GM12878 (cell line): ENCODE measurements at regions of chr13 and their contacts with region 1.

Region 1: DNA sequence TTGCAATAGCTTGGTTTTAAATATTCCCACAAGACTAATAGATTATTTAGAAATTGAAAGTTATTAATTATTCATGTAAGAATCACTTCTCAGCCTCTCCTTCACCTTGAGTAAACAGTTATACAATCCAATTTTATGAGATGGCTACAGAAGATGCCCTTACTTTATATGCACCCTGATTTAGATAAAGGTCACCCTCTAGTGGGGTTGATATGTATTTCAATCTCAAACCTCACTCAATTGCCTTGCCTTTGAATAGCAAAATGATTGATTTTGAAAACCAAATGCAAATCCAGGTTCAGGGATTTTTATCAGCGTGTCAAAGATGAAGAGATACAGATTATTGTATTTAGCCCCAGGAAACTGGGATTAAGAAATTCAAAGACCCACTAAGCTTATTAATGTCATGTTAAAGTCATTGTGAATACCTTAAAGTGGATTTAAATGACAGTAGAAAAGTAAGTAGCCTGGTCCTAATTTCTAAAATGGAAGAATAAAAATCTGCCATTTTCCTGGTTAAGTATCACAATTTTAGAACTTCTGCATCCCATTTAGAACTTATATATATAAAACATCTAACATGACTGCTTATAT is 305.1 kb downstream of the ITGBL1 start:
- DNase-seq: no peak
- ATAC-seq: peak; percentile 94
- H3K4me3 ChIP-seq: no peak overlapping the region
- H3K27ac ChIP-seq: no peak overlapping the region
- H3K4me1 ChIP-seq: no peaks in the 10 kb centered on the region
- H3K27me3 ChIP-seq: no peaks in the 10 kb centered on the region; a peak in 1 of 4 replicates
- CTCF ChIP-seq: peak; percentile 49 to 68 (median 53); a peak in 5 of 6 replicates
- EP300 ChIP-seq: no peak
- POLR2A ChIP-seq: no peak
- RAD21 ChIP-seq: peak; percentile 81

Region 2: DNA sequence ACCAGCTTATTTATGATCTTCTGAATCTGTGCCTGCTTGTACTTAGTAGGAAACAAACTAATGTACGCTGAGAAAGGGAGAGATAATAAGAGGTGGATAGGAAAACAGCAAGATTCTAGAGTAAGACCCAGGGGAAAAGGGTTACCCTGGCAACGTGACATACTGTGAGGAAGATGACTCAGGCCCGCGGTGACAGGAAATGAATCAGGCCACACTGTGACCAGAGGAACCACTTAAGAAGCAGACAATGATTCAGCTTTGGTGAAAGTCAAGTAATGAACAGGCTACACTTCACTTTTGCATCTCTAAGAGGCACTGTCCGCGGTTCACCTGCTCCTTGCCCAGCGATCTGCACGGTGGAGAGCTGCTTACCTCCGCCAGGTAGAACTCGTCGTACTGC is 499.5 kb before region 1 on chr13:
- CTCF ChIA-PET with region 1: no interaction called
- POLR2A ChIA-PET with region 1: no interaction called
- RAD21 ChIA-PET with region 1: no interaction called
- SMC1A ChIA-PET with region 1: no interaction called
- in situ Hi-C with region 1: no loop called
- intact Hi-C with region 1: loop called (anchors 10 kb)
- DNase-seq: peak; percentile 66
- ATAC-seq: peak; percentile 95
- H3K4me3 ChIP-seq: no peak overlapping the region
- H3K27ac ChIP-seq: no peak overlapping the region
- H3K4me1 ChIP-seq: no peaks in the 10 kb centered on the region
- H3K27me3 ChIP-seq: no peaks in the 10 kb centered on the region
- CTCF ChIP-seq: peak in 1 of 3 experiments; percentile 14; a peak in 1 of 6 replicates
- EP300 ChIP-seq: peak; percentile 32 to 43; a peak in 1 of 4 replicates
- POLR2A ChIP-seq: no peak
- RAD21 ChIP-seq: no peak

Region 3: GRCh38 chr13:101514788-101515187 is 242.8 kb before region 1 on chr13:
- CTCF ChIA-PET with region 1: interaction called, 117 read pairs
- POLR2A ChIA-PET with region 1: no interaction called
- RAD21 ChIA-PET with region 1: interaction called, 55 read pairs
- SMC1A ChIA-PET with region 1: interaction called, 86 read pairs
- in situ Hi-C with region 1: loop called (anchors 5 kb)
- intact Hi-C with region 1: loop called (anchors 1 kb)
- DNase-seq: no peak
- ATAC-seq: peak; percentile 86
- H3K4me3 ChIP-seq: no peak overlapping the region
- H3K27ac ChIP-seq: no peak overlapping the region
- H3K4me1 ChIP-seq: no peaks in the 10 kb centered on the region
- H3K27me3 ChIP-seq: no peaks in the 10 kb centered on the region
- CTCF ChIP-seq: peak; percentile 54 to 67 (median 63)
- EP300 ChIP-seq: no peak
- POLR2A ChIP-seq: no peak
- RAD21 ChIP-seq: peak; percentile 73

Region 4: DNA sequence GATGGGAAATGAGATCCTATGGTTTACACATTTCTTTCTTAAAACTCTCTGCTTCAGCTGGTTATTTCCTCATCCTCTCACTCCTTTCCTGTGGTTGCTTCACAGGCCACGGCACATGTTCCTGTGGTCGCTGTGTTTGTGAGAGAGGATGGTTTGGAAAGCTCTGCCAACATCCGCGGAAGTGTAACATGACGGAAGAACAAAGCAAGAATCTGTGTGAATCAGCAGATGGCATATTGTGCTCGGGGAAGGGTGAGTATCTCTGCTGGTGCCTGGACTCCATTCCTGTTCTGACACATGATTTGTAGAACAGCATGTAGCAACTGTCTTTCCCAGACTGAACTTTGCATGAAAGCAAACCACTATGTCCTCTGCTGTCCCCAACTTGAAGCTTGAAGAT is 50.9 kb before region 1 on chr13:
- CTCF ChIA-PET with region 1: interaction called, 17 read pairs
- POLR2A ChIA-PET with region 1: no interaction called
- RAD21 ChIA-PET with region 1: interaction called, 5 read pairs
- SMC1A ChIA-PET with region 1: interaction called, 9 read pairs
- in situ Hi-C with region 1: no loop called
- intact Hi-C with region 1: loop called (anchors 2 kb)
- DNase-seq: no peak
- ATAC-seq: peak; percentile 42
- H3K4me3 ChIP-seq: no peak overlapping the region
- H3K27ac ChIP-seq: no peak overlapping the region
- H3K4me1 ChIP-seq: no peaks in the 10 kb centered on the region
- H3K27me3 ChIP-seq: no peaks in the 10 kb centered on the region
- CTCF ChIP-seq: no peak
- EP300 ChIP-seq: no peak
- POLR2A ChIP-seq: no peak
- RAD21 ChIP-seq: no peak

Region 5: GRCh38 chr13:101747039-101747438 is 10.5 kb before region 1 on chr13:
- CTCF ChIA-PET with region 1: interaction called, 13 read pairs
- POLR2A ChIA-PET with region 1: no interaction called
- RAD21 ChIA-PET with region 1: interaction called, 7 read pairs
- SMC1A ChIA-PET with region 1: interaction called, 5 read pairs
- in situ Hi-C with region 1: no loop called
- intact Hi-C with region 1: no loop called
- DNase-seq: no peak
- ATAC-seq: peak; percentile 80
- H3K4me3 ChIP-seq: no peak overlapping the region
- H3K27ac ChIP-seq: no peak overlapping the region
- H3K4me1 ChIP-seq: no peaks in the 10 kb centered on the region
- H3K27me3 ChIP-seq: peaks cover 0 to 3% of the 10 kb centered on the region in 2 experiments; a peak in 1 of 4 replicates
- CTCF ChIP-seq: no peak
- EP300 ChIP-seq: no peak
- POLR2A ChIP-seq: no peak
- RAD21 ChIP-seq: no peak